Activated T-helper 2 cell treated with anti-CD3 and anti-CD28 coated beads, Interferon-gamma antibody, Interleukin-2, Interleukin-4, amounts not matched to agents 10 μg/mL and 5 μg/mL and 100 μg/mL, durations not matched to agents 14 hours and 24 hours and 36 hours (primary cell): ENCODE measurements at regions of chr6 and their contacts with region 1.

Region 1: GRCh38 chr6:73747289-73747688 is 51.3 kb downstream of the CD109 start:
- DNase-seq: no peak
- H3K4me3 Mint-ChIP-seq: no peak overlapping the region
- H3K27ac Mint-ChIP-seq: no peak overlapping the region
- H3K4me1 Mint-ChIP-seq: peaks cover 6% of the 10 kb centered on the region
- H3K27me3 Mint-ChIP-seq: no peaks in the 10 kb centered on the region

Region 2: DNA sequence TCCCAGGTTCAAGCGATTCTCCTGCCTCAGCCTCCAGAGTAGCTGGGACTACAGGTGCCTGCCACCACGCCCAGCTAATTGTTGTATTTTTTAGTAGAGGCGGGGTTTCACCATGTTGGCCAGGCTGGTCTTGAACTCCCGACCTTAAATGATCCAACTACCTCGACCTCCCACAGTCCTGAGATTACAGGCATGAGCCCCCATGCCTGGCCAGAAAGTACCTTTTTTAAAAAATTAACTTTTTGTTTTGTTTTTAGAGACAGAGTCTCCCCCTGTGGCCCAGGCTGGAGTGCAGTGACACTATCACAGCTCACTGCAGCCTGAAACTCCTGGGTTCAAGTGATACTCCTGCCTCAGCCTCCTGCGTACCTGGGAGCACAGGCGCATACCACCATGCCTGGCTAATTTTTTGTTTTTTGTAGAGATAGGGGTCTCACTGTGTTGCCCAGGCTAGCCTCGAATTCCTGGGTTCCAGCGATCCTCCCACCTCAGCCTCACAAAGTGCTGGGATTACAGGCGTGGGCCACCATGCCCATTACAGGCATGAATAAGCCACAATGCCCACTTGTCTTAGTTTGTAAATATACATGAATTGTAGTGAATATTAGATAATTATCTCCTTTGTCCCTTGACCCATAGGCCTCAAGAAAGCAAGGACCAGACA is 209.0 kb before region 1 on chr6:
- intact Hi-C with region 1: no loop called
- DNase-seq: no peak
- H3K4me3 Mint-ChIP-seq: no peak overlapping the region
- H3K27ac Mint-ChIP-seq: no peak overlapping the region
- H3K4me1 Mint-ChIP-seq: no peaks in the 10 kb centered on the region
- H3K27me3 Mint-ChIP-seq: peaks cover 4% of the 10 kb centered on the region

Region 3: GRCh38 chr6:73790574-73790973 is 43.3 kb after region 1 on chr6:
- intact Hi-C with region 1: loop called (anchors 5 kb)
- DNase-seq: no peak
- H3K4me3 Mint-ChIP-seq: no peak overlapping the region
- H3K27ac Mint-ChIP-seq: no peak overlapping the region
- H3K4me1 Mint-ChIP-seq: peaks cover 6% of the 10 kb centered on the region
- H3K27me3 Mint-ChIP-seq: no peaks in the 10 kb centered on the region

Region 4: GRCh38 chr6:74091136-74091793 is 344.0 kb after region 1 on chr6:
- intact Hi-C with region 1: loop called (anchors 10 kb)
- DNase-seq: no peak
- H3K4me3 Mint-ChIP-seq: no peak overlapping the region
- H3K27ac Mint-ChIP-seq: no peak overlapping the region
- H3K4me1 Mint-ChIP-seq: no peaks in the 10 kb centered on the region
- H3K27me3 Mint-ChIP-seq: no peaks in the 10 kb centered on the region